ENCODE measurements at regions of chr20 and their contacts with region 1.

Region 1: DNA sequence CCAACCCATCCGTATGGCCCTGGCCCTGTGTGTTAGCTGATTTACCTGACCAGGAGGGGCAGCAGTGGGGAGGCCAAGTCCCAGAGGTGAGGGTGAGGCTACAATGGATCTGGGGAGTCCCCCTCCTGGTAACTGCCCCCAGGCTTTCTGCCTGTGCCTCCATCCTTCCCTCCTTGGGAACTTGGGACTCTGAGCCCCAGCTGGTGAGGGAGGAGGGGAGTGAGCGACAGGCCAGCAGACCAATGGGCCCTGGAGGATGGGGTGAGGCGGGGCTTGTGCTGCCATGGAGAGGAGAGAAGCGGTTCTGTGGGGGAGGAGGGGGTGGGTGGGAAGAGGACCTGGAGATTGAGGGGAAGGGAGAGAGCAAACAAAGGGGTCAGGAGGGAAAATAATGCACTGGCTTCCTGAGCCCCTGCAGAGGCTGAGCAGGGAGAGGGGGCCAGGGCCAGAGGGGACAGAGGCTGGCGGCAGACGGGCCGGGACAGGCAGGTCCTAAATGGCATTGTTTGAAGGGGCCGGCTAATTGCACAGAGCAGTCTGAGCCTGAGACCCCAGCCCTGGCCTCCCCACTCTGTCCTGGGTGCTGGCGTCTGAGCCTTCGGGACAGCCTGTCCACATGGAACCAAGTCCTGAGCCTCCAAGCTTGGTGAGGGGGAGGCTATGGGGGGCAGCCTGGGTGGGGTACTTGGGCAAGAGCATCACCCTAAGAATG is 17.5 kb downstream of the DNMT3B start:
- DNase-seq: no peak
- H3K4me3 ChIP-seq: no peak overlapping the region
- H3K4me3 Mint-ChIP-seq: no peak overlapping the region
- H3K27ac ChIP-seq: no peak overlapping the region
- H3K27ac Mint-ChIP-seq: no peak overlapping the region
- H3K4me1 ChIP-seq: no peaks in the 10 kb centered on the region
- H3K4me1 Mint-ChIP-seq: peaks cover 0 to 4% (median 3%) of the 10 kb centered on the region in 4 donors
- H3K27me3 ChIP-seq: no peaks in the 10 kb centered on the region
- H3K27me3 Mint-ChIP-seq: no peaks in the 10 kb centered on the region

Region 2: GRCh38 chr20:31822421-31823330 is 957.0 kb before region 1 on chr20:
- CTCF ChIA-PET with region 1: interaction called, 4 read pairs
- POLR2A ChIA-PET with region 1: no interaction called
- intact Hi-C with region 1: loop called (anchors 2 kb)
- DNase-seq: peak; percentile 59 to 74 (median 63)
- H3K4me3 ChIP-seq: no peak overlapping the region
- H3K4me3 Mint-ChIP-seq: peak overlapping the region in 4 of 8 donors; percentile 20 to 52 (median 44)
- H3K27ac ChIP-seq: no peak overlapping the region
- H3K27ac Mint-ChIP-seq: peak overlapping the region in 1 of 7 donors; percentile 43
- H3K4me1 ChIP-seq: no peaks in the 10 kb centered on the region
- H3K4me1 Mint-ChIP-seq: peaks cover 0 to 7% (median 6%) of the 10 kb centered on the region in 4 donors
- H3K27me3 ChIP-seq: no peaks in the 10 kb centered on the region
- H3K27me3 Mint-ChIP-seq: peaks cover 0 to 2% of the 10 kb centered on the region in 2 donors

Region 3: DNA sequence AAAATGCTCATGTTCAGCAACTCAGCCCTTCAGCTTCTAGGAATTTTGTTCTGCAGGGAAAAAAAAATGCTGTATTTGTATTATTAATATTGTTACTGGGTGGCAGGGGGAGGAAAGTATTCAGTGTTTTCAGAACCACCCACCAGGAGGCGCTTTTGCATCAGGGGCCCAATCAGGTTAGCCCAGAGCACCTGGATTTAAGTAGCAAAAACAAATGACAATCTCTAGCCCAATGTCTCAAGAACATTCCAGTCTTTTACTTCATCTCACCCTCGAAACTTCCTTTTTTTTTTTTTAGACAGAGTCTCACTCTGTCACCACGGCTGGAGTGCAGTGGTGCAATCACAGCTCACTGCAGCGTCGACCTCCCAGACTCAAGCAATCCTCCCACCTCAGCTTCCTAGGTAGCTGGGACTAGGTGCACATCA is 105.3 kb before region 1 on chr20:
- CTCF ChIA-PET with region 1: interaction called, 422 read pairs
- POLR2A ChIA-PET with region 1: interaction called, 9 read pairs
- intact Hi-C with region 1: loop called (anchors 1 kb)
- DNase-seq: peak; percentile 65 to 67 (median 65)
- H3K4me3 ChIP-seq: no peak overlapping the region
- H3K4me3 Mint-ChIP-seq: no peak overlapping the region
- H3K27ac ChIP-seq: no peak overlapping the region
- H3K27ac Mint-ChIP-seq: peak overlapping the region in 1 of 7 donors; percentile 3
- H3K4me1 ChIP-seq: peaks cover 12% of the 10 kb centered on the region
- H3K4me1 Mint-ChIP-seq: peaks cover 3 to 20% (median 9%) of the 10 kb centered on the region in 4 donors
- H3K27me3 ChIP-seq: no peaks in the 10 kb centered on the region
- H3K27me3 Mint-ChIP-seq: no peaks in the 10 kb centered on the region

Region 4: GRCh38 chr20:32743237-32744112 is 36.2 kb before region 1 on chr20 and contains the start of gene COMMD7:
- CTCF ChIA-PET with region 1: interaction called, 38 read pairs
- POLR2A ChIA-PET with region 1: no interaction called
- intact Hi-C with region 1: loop called (anchors 5 kb)
- DNase-seq: peak; percentile 54 to 81 (median 61)
- H3K4me3 ChIP-seq: peak within 1 kb of the TSS; percentile 69 to 86
- H3K4me3 Mint-ChIP-seq: peak within 1 kb of the TSS; percentile 95 to 98 (median 96)
- H3K27ac ChIP-seq: peak within 1 kb of the TSS; percentile 79
- H3K27ac Mint-ChIP-seq: peak within 1 kb of the TSS; percentile 86 to 99 (median 97)
- H3K4me1 ChIP-seq: peaks cover 33% of the 10 kb centered on the region
- H3K4me1 Mint-ChIP-seq: peaks cover 15 to 46% (median 30%) of the 10 kb centered on the region in 4 donors
- H3K27me3 ChIP-seq: no peaks in the 10 kb centered on the region
- H3K27me3 Mint-ChIP-seq: no peaks in the 10 kb centered on the region
- total RNA-seq, gene COMMD7: 29.6 to 29.7 TPM

Region 5: GRCh38 chr20:32762149-32762753 is 17.4 kb before region 1 on chr20 and contains the start of gene DNMT3B:
- CTCF ChIA-PET with region 1: interaction called, 46 read pairs
- POLR2A ChIA-PET with region 1: interaction called, 3 read pairs
- intact Hi-C with region 1: no loop called
- DNase-seq: peak; percentile 58 to 73 (median 63)
- H3K4me3 ChIP-seq: peak within 1 kb of the TSS; percentile 23 to 69
- H3K4me3 Mint-ChIP-seq: peak within 1 kb of the TSS; percentile 86 to 92 (median 88)
- H3K27ac ChIP-seq: no peak within 1 kb of the TSS
- H3K27ac Mint-ChIP-seq: peak within 1 kb of the TSS; percentile 22 to 79 (median 61)
- H3K4me1 ChIP-seq: peaks cover 18% of the 10 kb centered on the region
- H3K4me1 Mint-ChIP-seq: peaks cover 9 to 21% (median 13%) of the 10 kb centered on the region in 4 donors
- H3K27me3 ChIP-seq: no peaks in the 10 kb centered on the region
- H3K27me3 Mint-ChIP-seq: no peaks in the 10 kb centered on the region
- total RNA-seq, gene DNMT3B: 0.38 to 0.47 TPM

Measured in CD4-positive, alpha-beta memory T cell (primary cell).